ENCODE measurements at regions of chr4 and their contacts with region 1.

Region 1: DNA sequence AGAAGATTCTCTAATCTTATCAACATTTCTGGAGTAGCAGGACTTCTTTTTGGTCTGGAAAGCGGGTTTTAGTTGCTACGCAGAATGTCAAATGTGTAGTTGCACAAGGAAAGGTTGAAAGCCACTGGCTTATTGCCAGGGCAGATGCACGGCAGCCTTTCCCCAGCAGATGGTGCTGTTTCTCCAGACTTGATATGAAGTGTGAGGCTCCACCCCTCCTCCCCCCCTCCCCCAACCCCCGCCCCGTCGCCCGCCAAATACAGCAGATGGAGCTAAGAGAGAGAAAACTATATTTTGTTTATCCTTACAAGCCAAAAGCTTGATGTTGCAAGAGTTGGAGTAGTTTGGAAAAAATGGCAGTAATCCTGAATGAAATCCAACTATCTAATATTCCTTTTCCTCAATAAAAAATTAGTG is 32.0 kb downstream of the ENOPH1 start:
- DNase-seq: peak; percentile 89
- H3K4me3 ChIP-seq: no peak overlapping the region
- H3K27ac ChIP-seq: no peak overlapping the region
- H3K4me1 ChIP-seq: no peaks in the 10 kb centered on the region; a peak in 1 of 4 replicates
- H3K27me3 ChIP-seq: no peaks in the 10 kb centered on the region
- CTCF ChIP-seq: peak; percentile 67
- EP300 ChIP-seq: no peak
- RAD21 ChIP-seq: peak; percentile 80

Region 2: DNA sequence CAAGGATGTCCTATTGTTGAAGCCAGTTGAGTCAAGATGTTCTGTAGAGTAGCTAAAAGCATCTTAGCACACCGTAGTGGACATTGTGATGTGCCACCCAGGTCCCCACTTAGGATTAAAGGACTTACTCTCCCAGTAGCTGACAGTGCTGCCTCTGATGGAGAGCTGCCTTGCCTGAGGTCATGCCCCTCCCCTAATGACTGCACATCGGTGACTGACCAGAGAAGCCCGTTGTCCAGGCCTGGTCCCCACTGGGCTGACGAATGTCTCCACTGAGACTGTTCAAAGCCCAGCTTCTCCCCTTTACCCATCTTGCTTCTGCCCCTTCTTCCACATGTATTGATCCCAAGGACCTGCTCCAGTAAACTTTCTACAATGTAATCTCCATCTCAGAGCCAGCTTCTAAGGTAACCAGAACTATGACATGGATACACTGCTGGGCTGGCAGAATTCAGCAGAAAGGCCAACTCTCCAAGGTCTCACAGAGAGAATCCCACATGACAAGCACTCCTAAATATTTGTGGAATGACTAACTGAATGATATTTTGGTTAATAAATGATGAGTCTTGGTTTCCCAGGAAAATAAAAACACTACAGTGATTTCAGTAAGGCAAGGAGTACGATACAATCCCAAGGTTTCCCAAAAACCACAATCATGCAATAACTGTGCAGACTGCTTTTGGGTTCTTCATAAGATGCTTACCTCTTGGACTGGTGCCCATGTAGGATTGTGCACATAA is 181.7 kb after region 1 on chr4:
- CTCF ChIA-PET with region 1: no interaction called
- POLR2A ChIA-PET with region 1: no interaction called
- DNase-seq: no peak
- H3K4me3 ChIP-seq: no peak overlapping the region
- H3K27ac ChIP-seq: peak overlapping the region in 1 of 2 experiments; percentile 62; a peak in 2 of 4 replicates
- H3K4me1 ChIP-seq: peaks cover 0 to 15% of the 10 kb centered on the region in 2 experiments; a peak in 2 of 4 replicates
- H3K27me3 ChIP-seq: no peaks in the 10 kb centered on the region
- CTCF ChIP-seq: no peak
- EP300 ChIP-seq: no peak
- RAD21 ChIP-seq: no peak

Region 3: DNA sequence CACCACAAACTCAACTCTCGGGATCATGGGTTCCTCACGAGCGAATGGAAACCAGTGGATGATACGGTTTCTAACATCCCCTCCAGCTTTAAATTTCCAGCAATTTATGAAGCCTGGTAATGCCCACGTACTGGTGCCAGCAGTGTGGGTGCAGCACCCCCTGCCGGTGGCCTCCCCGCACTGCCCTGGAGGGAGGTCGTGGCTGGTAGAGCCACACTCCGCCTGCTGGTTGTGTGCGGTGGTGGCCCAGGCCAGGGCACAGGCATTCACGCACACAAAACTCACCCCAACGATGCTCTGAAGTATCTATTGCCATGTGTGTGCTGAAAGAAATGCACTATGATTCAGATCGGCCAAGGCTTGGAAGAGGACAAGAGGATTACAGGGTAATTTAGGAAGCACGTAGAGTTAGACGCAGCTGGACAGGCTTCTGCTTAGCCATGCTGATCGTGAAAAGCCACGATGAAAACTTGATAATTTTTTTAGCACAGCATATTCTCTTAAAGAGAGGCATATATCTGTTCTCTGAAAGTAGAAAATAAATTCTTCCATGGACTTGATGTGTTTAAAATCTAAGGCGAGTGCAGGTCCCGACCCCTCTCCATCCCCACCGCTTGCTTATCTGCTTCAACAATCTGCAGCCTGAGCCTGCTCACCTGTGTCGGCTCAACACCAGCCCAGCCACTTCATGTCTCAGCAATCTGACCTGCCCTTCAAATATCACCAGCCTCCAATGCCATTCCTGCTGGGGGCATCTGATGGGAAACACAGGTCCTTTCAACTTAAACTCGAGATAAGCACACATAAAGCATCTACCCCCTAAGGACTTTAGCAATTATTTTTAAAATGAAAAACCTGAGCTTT is 277.1 kb after region 1 on chr4:
- CTCF ChIA-PET with region 1: interaction called, 16 read pairs
- POLR2A ChIA-PET with region 1: no interaction called
- DNase-seq: peak; percentile 77
- H3K4me3 ChIP-seq: peak overlapping the region in 1 of 2 experiments; percentile 41; a peak in 1 of 4 replicates
- H3K27ac ChIP-seq: no peak overlapping the region
- H3K4me1 ChIP-seq: peaks cover 0 to 10% of the 10 kb centered on the region in 2 experiments; a peak in 2 of 4 replicates
- H3K27me3 ChIP-seq: no peaks in the 10 kb centered on the region
- CTCF ChIP-seq: peak; percentile 71
- EP300 ChIP-seq: no peak
- RAD21 ChIP-seq: peak; percentile 77